IMR-90 (cell line): ENCODE measurements at regions of chr17 and their contacts with region 1.

Region 1: GRCh38 chr17:37182786-37183465 is 192.9 kb upstream of the C17orf78 start:
- DNase-seq: peak; percentile 15
- ATAC-seq: peak; percentile 30
- H3K4me3 ChIP-seq: no peak overlapping the region
- H3K27ac ChIP-seq: no peak overlapping the region
- H3K4me1 ChIP-seq: peaks cover 2% of the 10 kb centered on the region; the same call in 1 of the 2 replicates
- H3K27me3 ChIP-seq: no peaks in the 10 kb centered on the region
- CTCF ChIP-seq: no peak
- POLR2A ChIP-seq: no peak
- RAD21 ChIP-seq: no peak

Region 2: DNA sequence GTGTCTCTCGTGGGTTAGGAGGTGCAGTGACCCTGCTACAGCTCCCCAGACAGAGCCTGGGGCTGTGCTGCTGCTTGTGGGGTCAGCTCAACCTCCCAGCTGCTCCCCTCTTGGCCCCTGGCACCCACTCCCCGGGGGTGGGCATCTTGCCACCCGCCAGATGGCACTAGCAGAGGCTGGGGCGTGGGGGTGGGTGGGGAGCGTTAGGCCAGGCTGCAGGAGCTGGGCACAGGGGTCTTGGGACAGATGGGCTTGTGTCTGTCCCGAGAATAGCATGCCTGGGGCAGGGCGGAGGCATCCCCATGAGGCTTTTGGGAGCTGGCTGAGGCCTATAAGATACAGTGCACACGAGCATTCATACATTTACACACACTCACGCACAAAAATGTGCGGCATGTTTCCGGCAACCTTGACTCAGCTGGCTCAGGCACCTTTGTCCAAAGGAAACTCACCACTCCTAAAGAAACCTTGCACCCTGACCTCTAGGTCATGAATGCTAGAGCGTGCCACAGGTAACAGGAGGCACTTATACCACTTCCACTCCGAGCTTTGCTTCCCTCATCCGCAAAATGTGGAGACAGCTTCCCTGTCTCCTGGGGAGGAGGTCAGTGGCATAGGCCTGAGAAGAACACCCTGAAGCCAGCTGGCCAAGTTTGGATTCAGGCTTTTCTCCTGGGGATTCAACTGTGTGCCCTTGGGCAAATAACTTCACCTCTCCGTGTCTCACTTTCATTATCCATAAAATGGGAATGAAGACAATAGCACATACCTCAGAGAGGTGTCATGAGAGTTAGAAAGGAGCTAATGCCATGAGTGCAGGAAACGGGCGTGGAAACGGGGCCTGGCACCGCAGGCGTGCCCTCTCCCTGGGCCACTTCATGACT is 324.6 kb before region 1 on chr17:
- CTCF ChIA-PET with region 1: no interaction called
- POLR2A ChIA-PET with region 1: interaction called, 10 read pairs
- dilution Hi-C with region 1: no loop called
- in situ Hi-C with region 1: no loop called
- intact Hi-C with region 1: no loop called
- DNase-seq: no peak
- ATAC-seq: no peak
- H3K4me3 ChIP-seq: no peak overlapping the region
- H3K27ac ChIP-seq: no peak overlapping the region
- H3K4me1 ChIP-seq: no peaks in the 10 kb centered on the region
- H3K27me3 ChIP-seq: peaks cover 32% of the 10 kb centered on the region
- CTCF ChIP-seq: no peak
- POLR2A ChIP-seq: no peak
- RAD21 ChIP-seq: no peak

Region 3: GRCh38 chr17:37406635-37407461 is 223.9 kb after region 1 on chr17 and contains the starts of genes ACACA and TADA2A:
- CTCF ChIA-PET with region 1: no interaction called
- POLR2A ChIA-PET with region 1: interaction called, 18 read pairs
- dilution Hi-C with region 1: no loop called
- in situ Hi-C with region 1: no loop called
- intact Hi-C with region 1: no loop called
- DNase-seq: peak; percentile 63
- ATAC-seq: peak; percentile 97
- H3K4me3 ChIP-seq: peak within 1 kb of the TSS; percentile 66
- H3K27ac ChIP-seq: peak within 1 kb of the TSS; percentile 85
- H3K4me1 ChIP-seq: no peaks in the 10 kb centered on the region; the same call in 1 of the 2 replicates
- H3K27me3 ChIP-seq: no peaks in the 10 kb centered on the region
- CTCF ChIP-seq: no peak
- POLR2A ChIP-seq: peak; percentile 81
- RAD21 ChIP-seq: no peak
- total RNA-seq, gene ACACA: 35.3 and 39.1 TPM in 2 replicates
- total RNA-seq, gene TADA2A: 17.2 and 19.7 TPM in 2 replicates